T-cell (primary cell): ENCODE measurements at regions of chr2 and their contacts with region 1.

Region 1: DNA sequence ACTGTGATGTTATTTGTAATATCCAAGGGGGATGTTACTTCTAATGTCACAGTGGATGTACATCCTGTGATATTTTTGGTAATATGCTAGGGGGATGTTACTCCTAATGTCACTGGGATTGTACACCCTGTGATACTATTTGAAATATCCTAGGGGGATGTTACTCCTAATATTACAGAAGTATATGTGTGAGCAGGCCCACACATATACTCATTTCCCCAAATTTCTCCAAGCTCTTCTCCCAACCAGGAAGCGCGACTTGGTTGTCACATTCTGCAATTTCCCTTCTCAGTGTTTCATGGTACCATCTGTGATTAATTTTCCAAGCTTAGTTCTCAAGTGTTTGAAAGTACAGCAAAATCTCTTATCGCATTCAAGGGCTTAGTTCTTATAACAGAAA is 29.5 kb upstream of the CHN1 start:
- DNase-seq: no peak
- ATAC-seq: no peak
- H3K4me3 ChIP-seq: no peak overlapping the region
- H3K4me3 Mint-ChIP-seq: no peak overlapping the region
- H3K27ac ChIP-seq: no peak overlapping the region
- H3K27ac Mint-ChIP-seq: no peak overlapping the region
- H3K4me1 ChIP-seq: peaks cover 0 to 3% of the 10 kb centered on the region in 2 experiments
- H3K4me1 Mint-ChIP-seq: peaks cover 9 to 18% (median 12%) of the 10 kb centered on the region in 3 donors
- H3K27me3 ChIP-seq: no peaks in the 10 kb centered on the region
- H3K27me3 Mint-ChIP-seq: no peaks in the 10 kb centered on the region

Region 2: DNA sequence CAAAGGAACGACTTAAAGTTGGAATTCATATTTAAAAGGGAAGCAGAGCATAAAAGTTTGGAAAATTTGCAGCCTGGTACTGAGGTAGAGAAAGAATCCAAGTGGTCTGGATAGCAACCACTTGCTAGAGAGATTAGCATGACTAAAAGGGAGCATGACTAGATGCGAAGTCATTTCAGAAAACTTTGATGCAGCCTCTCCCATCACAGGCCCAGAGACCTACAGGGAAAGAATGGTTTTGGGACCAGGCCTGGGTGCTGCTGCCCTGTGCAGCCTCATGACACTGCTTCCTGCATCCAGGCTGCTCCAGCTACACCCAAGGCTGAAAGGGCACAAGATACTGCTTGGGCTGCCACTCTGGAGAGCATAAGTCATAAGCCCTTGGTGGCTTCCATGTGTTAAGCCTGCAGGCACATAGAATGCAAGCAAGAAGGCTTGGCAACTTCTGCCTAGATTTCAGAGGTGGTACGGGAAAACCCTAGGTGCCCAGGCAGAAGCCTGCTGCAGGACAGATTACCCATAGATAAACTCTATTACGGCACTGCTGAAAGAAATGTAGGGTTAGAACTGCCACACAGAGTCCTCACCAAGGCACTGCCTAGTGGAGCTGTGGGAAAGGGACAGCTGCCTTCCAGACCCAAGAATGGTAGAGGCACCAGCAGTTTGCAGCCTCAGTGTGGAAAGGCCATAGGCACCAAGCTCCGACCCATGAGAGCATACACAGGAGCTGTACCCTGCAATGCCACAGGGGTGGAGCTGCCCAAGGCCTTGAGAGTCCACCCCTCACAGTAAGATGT is 16.9 kb before region 1 on chr2:
- CTCF ChIA-PET with region 1: no interaction called
- POLR2A ChIA-PET with region 1: no interaction called
- DNase-seq: no peak
- ATAC-seq: no peak
- H3K4me3 ChIP-seq: no peak overlapping the region
- H3K4me3 Mint-ChIP-seq: no peak overlapping the region
- H3K27ac ChIP-seq: no peak overlapping the region
- H3K27ac Mint-ChIP-seq: no peak overlapping the region
- H3K4me1 ChIP-seq: no peaks in the 10 kb centered on the region
- H3K4me1 Mint-ChIP-seq: no peaks in the 10 kb centered on the region
- H3K27me3 ChIP-seq: peaks cover 0 to 4% of the 10 kb centered on the region in 2 experiments
- H3K27me3 Mint-ChIP-seq: peaks cover 0 to 5% of the 10 kb centered on the region in 2 donors

Region 3: DNA sequence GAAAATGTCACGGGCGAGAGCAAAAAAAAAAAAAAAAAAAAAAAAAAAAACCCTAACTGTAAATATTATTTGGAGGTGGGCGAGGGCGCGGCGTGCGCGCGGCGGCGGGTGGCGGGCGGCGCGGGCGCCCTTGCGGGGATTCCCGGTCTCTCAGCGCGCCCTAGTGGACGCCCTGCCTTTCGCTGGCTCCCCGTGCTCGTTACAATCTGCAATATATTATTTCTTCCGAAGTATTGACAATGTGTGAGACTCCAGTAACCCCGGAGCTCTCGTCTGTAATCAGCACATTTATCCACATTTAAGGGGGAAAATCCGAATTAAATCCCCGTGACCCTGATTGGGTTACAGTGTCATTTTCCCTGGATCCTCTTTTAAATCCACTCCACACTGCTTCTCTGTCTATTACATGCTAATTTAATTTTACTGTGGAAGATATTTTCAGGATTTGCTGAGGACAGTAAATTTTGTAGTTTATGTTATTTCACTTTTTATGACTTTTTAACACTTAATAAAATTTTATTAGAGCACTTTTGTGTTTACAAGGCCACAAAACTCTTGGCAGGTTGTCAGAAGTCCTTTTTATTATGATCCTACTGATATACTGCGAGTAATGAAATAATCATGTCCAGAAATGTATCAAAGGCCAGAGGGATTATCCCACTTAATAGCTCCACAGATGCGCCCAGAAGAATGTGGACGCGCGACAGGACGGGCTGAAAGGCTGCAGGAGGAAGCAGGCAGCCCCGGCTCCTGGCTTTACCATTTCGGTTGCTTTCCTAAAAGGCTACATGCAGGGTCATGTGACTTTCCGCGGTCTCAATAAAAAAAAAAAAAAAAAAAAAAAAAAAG is 1603.7 kb after region 1 on chr2:
- CTCF ChIA-PET with region 1: interaction called in 1 of 2 experiments, 11 read pairs
- POLR2A ChIA-PET with region 1: no interaction called
- DNase-seq: peak in 33 of 35 experiments; percentile 12 to 70 (median 45)
- ATAC-seq: peak; percentile 75 to 90 (median 79)
- H3K4me3 ChIP-seq: peak overlapping the region; percentile 42 to 67
- H3K4me3 Mint-ChIP-seq: peak overlapping the region; percentile 53 to 63 (median 57)
- H3K27ac ChIP-seq: no peak overlapping the region
- H3K27ac Mint-ChIP-seq: no peak overlapping the region
- H3K4me1 ChIP-seq: peaks cover 0 to 9% of the 10 kb centered on the region in 2 experiments
- H3K4me1 Mint-ChIP-seq: peaks cover 0 to 9% (median 9%) of the 10 kb centered on the region in 3 donors
- H3K27me3 ChIP-seq: peaks cover 22 to 37% of the 10 kb centered on the region in 2 experiments
- H3K27me3 Mint-ChIP-seq: peaks cover 56 to 68% of the 10 kb centered on the region in 2 donors